Activated CD4-positive, alpha-beta memory T cell treated with anti-CD3 and anti-CD28 coated beads, Interleukin-2, amount 10 ng/mL, durations not matched to agents 7 days and 5 days (primary cell): ENCODE measurements at regions of chr6 and their contacts with region 1.

Region 1: GRCh38 chr6:33248925-33249731 is 22.5 kb downstream of the VPS52 start:
- DNase-seq: peak; percentile 98
- H3K4me3 Mint-ChIP-seq: peak overlapping the region; percentile 74
- H3K27ac Mint-ChIP-seq: peak overlapping the region; percentile 87
- H3K4me1 Mint-ChIP-seq: peaks cover 46% of the 10 kb centered on the region
- H3K27me3 Mint-ChIP-seq: no peaks in the 10 kb centered on the region

Region 2: GRCh38 chr6:32807020-32807580 is 442.0 kb before region 1 on chr6:
- CTCF ChIA-PET with region 1: no interaction called
- POLR2A ChIA-PET with region 1: no interaction called
- DNase-seq: no peak
- H3K4me3 Mint-ChIP-seq: no peak overlapping the region
- H3K27ac Mint-ChIP-seq: no peak overlapping the region
- H3K4me1 Mint-ChIP-seq: no peaks in the 10 kb centered on the region
- H3K27me3 Mint-ChIP-seq: peaks cover 44% of the 10 kb centered on the region

Region 3: DNA sequence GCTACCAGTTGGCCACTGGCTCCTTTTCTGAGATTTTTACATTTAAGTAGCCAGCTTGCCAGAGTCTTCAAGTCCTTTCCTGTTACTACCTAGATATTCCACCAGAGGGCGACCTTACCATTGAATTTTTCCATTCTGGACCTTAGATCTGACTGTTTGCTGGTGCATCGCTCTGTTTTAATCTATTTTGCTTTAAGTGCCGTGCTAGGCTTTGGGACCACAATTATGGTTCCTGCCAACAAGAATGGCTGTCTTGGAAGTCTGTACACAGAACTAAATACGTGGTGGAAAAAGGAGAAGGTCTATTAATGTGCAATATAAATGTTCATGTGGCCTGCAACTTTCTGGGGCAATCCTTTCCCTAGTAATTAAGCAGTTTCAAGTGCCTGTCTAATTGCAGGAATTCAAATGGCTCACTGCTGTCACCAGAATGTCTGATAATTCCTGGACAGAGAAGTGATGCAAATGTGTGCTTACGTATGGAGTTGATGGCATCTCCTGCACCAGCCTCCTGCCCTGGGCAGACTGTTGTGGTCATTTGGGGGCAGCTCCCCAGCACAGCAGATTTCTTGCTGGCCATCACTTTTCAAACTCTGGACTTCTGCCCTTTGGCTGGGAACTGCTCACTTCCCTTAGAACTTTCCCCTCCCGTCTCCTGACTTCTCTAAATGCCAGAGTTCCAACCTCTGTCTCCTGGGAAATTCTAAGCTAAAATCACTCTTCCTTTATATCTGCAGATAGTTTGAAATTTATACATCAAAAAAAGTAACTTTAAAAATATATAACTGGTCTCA is 234.1 kb before region 1 on chr6:
- CTCF ChIA-PET with region 1: interaction called, 16 read pairs
- POLR2A ChIA-PET with region 1: no interaction called
- DNase-seq: peak; percentile 45
- H3K4me3 Mint-ChIP-seq: no peak overlapping the region
- H3K27ac Mint-ChIP-seq: no peak overlapping the region
- H3K4me1 Mint-ChIP-seq: peaks cover 22% of the 10 kb centered on the region
- H3K27me3 Mint-ChIP-seq: peaks cover 46% of the 10 kb centered on the region

Region 4: GRCh38 chr6:33126101-33126714 is 122.9 kb before region 1 on chr6:
- CTCF ChIA-PET with region 1: interaction called, 62 read pairs
- POLR2A ChIA-PET with region 1: interaction called, 13 read pairs
- DNase-seq: peak; percentile 73
- H3K4me3 Mint-ChIP-seq: no peak overlapping the region
- H3K27ac Mint-ChIP-seq: no peak overlapping the region
- H3K4me1 Mint-ChIP-seq: peaks cover 25% of the 10 kb centered on the region
- H3K27me3 Mint-ChIP-seq: peaks cover 16% of the 10 kb centered on the region

Region 5: DNA sequence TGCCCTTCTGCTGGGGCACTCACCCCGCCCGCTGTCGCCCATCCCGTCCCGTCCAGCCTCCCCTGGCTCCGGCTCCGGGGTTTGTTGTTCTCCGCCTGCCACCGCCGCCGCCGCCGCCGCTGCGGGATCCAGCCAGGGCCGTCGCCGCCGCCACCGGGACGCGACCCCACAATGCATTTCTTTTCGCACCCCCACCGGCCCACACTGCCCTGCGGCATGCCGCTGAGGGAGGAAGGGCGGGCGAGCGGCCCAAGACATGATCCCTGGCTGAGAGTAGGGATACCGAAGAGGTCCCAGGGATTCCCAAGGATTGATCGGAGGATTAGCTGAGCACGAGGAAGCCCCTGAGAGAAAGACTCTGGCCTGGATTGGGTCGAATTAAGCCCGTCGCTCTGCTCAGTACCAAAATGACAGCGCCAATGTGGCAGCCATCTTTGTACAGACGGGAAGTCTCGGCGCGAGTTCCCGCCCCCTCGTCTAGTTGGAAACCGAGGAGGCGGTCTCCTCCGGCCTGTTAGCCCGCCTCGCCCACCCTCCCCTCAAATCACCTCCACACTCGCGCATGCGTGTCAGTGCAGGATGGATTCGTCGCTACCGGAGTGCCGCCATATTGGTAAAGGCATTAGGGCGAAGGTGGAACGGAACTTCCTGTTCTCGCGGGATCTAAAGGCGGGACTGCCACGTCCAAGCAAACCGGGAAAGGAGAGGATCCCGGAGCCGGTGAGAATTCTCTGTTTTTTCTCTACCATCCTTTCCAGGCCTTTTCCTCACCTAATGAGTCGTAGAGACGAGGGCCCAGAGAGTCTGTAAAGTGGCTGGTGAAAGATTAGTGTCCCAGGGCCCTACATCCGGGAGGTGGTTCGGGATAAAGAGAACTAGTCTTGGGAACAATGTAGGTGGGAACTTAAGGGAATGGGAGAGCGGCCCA is 48.6 kb before region 1 on chr6 and contains the starts of genes RXRB and SLC39A7:
- CTCF ChIA-PET with region 1: interaction called, 9 read pairs
- POLR2A ChIA-PET with region 1: interaction called, 14 read pairs
- DNase-seq: peak; percentile 100
- H3K4me3 Mint-ChIP-seq: peak within 1 kb of the TSS; percentile 99
- H3K27ac Mint-ChIP-seq: peak within 1 kb of the TSS; percentile 95
- H3K4me1 Mint-ChIP-seq: peaks cover 71% of the 10 kb centered on the region
- H3K27me3 Mint-ChIP-seq: no peaks in the 10 kb centered on the region
- total RNA-seq, gene RXRB: 44.0 to 45.0 TPM
- total RNA-seq, gene SLC39A7: 52.8 to 53.8 TPM

Region 6: GRCh38 chr6:33237741-33238140 is 11.4 kb before region 1 on chr6:
- CTCF ChIA-PET with region 1: interaction called, 17 read pairs
- POLR2A ChIA-PET with region 1: interaction called, 4 read pairs
- DNase-seq: no peak
- H3K4me3 Mint-ChIP-seq: no peak overlapping the region
- H3K27ac Mint-ChIP-seq: no peak overlapping the region
- H3K4me1 Mint-ChIP-seq: peaks cover 8% of the 10 kb centered on the region
- H3K27me3 Mint-ChIP-seq: peaks cover 45% of the 10 kb centered on the region

Region 7: GRCh38 chr6:33271458-33272274 is 22.5 kb after region 1 on chr6 and contains the starts of genes RPS18 and VPS52:
- CTCF ChIA-PET with region 1: interaction called, 27 read pairs
- POLR2A ChIA-PET with region 1: interaction called, 71 read pairs
- DNase-seq: peak; percentile 93
- H3K4me3 Mint-ChIP-seq: peak within 1 kb of the TSS; percentile 92
- H3K27ac Mint-ChIP-seq: peak within 1 kb of the TSS; percentile 99
- H3K4me1 Mint-ChIP-seq: peaks cover 64% of the 10 kb centered on the region
- H3K27me3 Mint-ChIP-seq: no peaks in the 10 kb centered on the region
- total RNA-seq, gene RPS18: 2,403 to 2,442 TPM
- total RNA-seq, gene VPS52: 53.1 to 59.7 TPM

Region 8: GRCh38 chr6:33288921-33289748 is 40.0 kb after region 1 on chr6 and contains the starts of genes PFDN6 and WDR46:
- CTCF ChIA-PET with region 1: interaction called, 3 read pairs
- POLR2A ChIA-PET with region 1: interaction called, 26 read pairs
- DNase-seq: peak; percentile 87
- H3K4me3 Mint-ChIP-seq: peak within 1 kb of the TSS; percentile 90
- H3K27ac Mint-ChIP-seq: peak within 1 kb of the TSS; percentile 80
- H3K4me1 Mint-ChIP-seq: peaks cover 47% of the 10 kb centered on the region
- H3K27me3 Mint-ChIP-seq: no peaks in the 10 kb centered on the region
- total RNA-seq, gene PFDN6: 63.5 to 65.0 TPM
- total RNA-seq, gene WDR46: 37.5 to 41.7 TPM